ENCODE measurements at regions of chr17 and their contacts with region 1.

Region 1: GRCh38 chr17:42609182-42609813 is at the starts of genes RETREG3 and TUBG1:
- DNase-seq: peak; percentile 100
- ATAC-seq: peak; percentile 99
- total RNA-seq, gene RETREG3: 22.5 TPM
- total RNA-seq, gene TUBG1: 54.3 TPM

Region 2: DNA sequence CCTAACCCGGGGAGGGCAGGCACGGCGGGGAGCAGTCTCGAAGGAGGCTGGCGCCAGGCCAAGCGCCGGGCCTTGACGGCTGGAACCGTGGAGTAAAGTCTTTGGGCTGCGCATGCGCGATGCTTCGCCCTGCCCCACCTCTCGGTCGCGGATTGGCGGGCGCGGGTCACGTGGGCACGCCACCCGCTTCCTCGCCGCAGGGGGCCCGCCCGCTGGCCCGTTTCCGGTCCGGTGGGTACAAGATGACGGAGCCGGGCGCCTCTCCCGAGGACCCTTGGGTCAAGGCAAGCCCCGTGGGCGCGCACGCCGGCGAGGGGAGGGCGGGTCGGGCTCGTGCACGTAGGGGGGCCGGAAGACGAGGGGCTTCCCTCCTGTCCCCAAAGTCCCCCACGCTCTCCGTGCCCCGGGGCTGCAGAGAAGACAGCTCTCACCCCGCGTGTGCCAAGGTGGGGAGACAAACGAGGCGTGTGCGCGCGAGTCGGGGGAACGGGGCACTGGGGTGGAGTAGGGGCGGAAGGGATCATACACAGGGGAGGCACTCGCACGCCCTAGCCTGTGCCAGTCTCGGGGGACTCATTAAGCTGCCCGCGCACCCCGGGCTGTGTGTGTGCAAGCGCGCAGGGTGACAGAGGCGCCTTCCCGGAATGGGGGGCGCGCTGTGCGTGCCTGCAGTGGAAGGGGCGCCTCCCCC is 42.3 kb before region 1 on chr17 and contains the start of gene MLX:
- intact Hi-C with region 1: loop called (anchors 5 kb)
- DNase-seq: peak; percentile 98
- ATAC-seq: peak; percentile 85
- total RNA-seq, gene MLX: 65.9 TPM

Region 3: GRCh38 chr17:42586514-42587230 is 22.6 kb before region 1 on chr17:
- intact Hi-C with region 1: no loop called
- DNase-seq: no peak
- ATAC-seq: no peak

Region 4: DNA sequence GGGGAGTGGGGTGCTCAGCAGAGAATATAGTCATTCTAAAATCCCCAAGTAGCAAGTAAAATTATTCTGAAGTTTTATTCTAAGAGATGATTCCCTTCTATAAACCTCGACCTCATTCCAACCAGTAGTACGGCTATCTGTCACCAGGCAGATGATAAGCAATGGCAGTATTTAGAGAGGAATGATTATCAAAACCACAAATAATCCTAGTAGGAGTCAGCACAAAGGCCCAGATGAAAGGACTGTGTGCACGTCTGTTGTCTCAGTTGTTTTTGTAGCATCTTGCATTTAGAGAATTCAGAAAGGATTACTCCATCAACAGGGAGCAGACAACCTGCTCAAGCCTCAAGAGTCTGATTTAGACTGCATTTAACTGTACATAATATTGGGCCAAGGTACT is 114.3 kb after region 1 on chr17:
- intact Hi-C with region 1: no loop called
- DNase-seq: no peak
- ATAC-seq: no peak

Measured in Right ventricle myocardium inferior (tissue), 1 donor.